MCF 10A (cell line): ENCODE measurements at regions of chr10 and their contacts with region 1.

Region 1: DNA sequence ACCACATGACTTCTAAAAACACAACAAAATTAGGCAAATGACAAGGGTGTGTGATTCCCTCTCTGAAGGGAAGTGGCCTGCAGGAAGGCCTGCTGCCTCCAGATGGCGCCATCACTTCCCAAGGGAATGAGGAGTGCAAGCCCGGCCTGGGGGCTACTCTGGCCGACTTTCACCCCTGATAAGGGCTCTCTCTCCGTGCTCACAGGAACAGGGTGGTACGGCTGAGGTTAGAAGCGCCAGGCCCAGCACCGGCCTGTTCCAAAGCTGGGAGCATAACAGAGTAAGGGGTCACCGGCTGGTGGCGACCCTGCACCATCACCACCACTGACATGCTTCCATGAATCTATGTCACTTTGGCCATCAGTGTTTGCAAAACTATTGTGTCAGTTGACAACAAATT is 13.1 kb downstream of the RBP3 start:
- DNase-seq: peak; percentile 60
- H3K4me3 Mint-ChIP-seq: no peak overlapping the region
- H3K27ac Mint-ChIP-seq: no peak overlapping the region
- H3K4me1 Mint-ChIP-seq: no peaks in the 10 kb centered on the region
- H3K27me3 Mint-ChIP-seq: no peaks in the 10 kb centered on the region
- CTCF ChIP-seq: peak; percentile 72

Region 2: GRCh38 chr10:47374611-47375536 is 13.6 kb after region 1 on chr10:
- CTCF ChIA-PET with region 1: interaction called, 48 read pairs
- POLR2A ChIA-PET with region 1: no interaction called
- intact Hi-C with region 1: no loop called
- DNase-seq: no peak
- H3K4me3 Mint-ChIP-seq: no peak overlapping the region
- H3K27ac Mint-ChIP-seq: no peak overlapping the region
- H3K4me1 Mint-ChIP-seq: peaks cover 8% of the 10 kb centered on the region
- H3K27me3 Mint-ChIP-seq: peaks cover 37% of the 10 kb centered on the region
- CTCF ChIP-seq: no peak